ENCODE measurements at regions of chr6 and their contacts with region 1.

Region 1: DNA sequence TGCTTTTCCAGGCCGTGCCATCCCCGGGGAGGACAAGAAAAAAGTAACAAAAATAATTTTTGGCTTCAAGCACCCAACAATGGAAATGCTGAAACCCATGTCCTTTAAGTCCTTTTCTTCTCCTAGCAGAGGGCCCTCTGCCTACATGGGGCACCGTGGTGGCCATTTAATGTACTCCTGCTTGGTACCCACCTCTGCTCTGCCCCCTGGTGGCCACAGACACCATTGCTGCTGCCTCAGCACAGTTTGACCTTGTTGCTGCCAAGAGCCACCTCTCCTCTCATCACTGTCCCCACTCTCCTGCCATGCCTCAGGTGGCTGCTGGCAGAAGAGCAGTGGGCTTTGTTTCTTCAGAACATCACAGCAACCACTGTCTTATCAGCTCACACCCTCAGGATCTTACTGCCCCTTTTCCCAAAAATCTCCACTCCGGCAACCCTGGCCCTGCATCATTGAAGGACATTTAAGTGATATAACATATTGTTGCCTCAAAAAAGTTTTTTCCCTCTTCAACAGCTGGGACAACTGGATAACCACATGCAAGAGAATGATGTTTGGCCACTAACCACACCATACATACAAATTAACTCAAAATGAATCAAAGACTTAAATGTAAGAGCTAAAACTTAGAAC is 12.9 kb upstream of the ARMC2 start:
- DNase-seq: peak; percentile 16
- H3K4me3 ChIP-seq: no peak overlapping the region
- CTCF ChIP-seq: peak; percentile 93

Region 2: DNA sequence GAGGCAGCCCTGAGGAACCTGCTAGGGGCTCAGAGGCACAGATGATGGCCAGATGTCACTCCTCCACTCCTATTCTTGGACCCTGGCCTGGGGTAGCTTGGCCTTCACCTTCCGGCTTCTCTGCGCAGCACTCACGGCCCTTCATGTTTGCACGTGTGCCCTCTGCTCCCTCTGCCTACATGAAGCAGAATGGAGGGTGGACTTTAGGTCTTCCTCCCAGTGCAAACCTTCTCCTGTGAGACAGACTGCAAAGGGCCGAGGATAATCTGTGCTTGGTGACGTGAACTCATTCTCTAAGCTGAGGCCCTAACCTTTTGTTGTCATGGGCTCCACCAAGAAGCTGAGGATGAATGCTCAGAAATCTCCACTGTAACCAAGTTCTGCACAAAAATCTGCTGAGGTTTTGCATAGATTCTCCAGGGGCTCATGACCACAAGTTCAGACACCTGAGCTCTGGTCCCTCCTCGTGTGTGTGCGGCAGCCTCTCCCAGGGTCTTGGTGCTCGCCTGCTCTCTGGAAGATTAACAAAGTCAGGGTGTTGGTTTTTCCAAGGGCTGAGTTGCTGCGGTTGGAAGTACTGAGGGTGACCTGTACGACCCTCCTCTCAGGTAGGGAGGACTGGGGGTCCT is 300.1 kb before region 1 on chr6:
- CTCF ChIA-PET with region 1: interaction called, 122 read pairs
- POLR2A ChIA-PET with region 1: no interaction called
- DNase-seq: no peak
- H3K4me3 ChIP-seq: no peak overlapping the region
- CTCF ChIP-seq: no peak

Region 3: GRCh38 chr6:108848116-108848868 is 13.0 kb after region 1 on chr6 and contains the start of gene ARMC2:
- CTCF ChIA-PET with region 1: interaction called, 64 read pairs
- POLR2A ChIA-PET with region 1: no interaction called
- DNase-seq: peak; percentile 9
- H3K4me3 ChIP-seq: peak within 1 kb of the TSS; percentile 87
- CTCF ChIP-seq: no peak